ENCODE measurements at regions of chr4 and their contacts with region 1.

Region 1: GRCh38 chr4:37279894-37280592 is 35.5 kb downstream of the NWD2 start:
- DNase-seq: no peak
- H3K4me3 ChIP-seq: no peak overlapping the region
- H3K27ac ChIP-seq: no peak overlapping the region
- H3K4me1 ChIP-seq: no peaks in the 10 kb centered on the region
- H3K27me3 ChIP-seq: no peaks in the 10 kb centered on the region
- CTCF ChIP-seq: no peak
- EP300 ChIP-seq: no peak
- POLR2A ChIP-seq: no peak

Region 2: DNA sequence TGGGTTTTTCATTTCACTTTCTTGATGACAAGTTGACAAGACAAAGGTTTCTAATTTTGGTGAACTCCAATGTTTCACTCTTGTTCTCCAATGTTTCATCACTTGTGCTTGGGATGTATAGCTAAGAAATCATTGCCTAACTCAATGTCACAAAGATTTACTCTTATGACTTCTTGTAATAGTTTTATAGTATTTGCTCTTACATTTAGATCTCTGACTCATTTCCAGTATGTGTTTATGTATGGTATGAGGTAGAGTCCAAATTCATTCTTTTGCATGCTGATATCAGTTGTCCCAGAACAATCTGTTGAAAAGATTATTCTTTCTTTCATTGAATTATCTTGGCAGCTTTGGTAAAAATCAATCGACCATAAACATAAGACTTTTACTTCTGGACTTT is 47.7 kb before region 1 on chr4:
- intact Hi-C with region 1: no loop called
- DNase-seq: no peak
- H3K4me3 ChIP-seq: no peak overlapping the region
- H3K27ac ChIP-seq: no peak overlapping the region
- H3K4me1 ChIP-seq: no peaks in the 10 kb centered on the region
- H3K27me3 ChIP-seq: no peaks in the 10 kb centered on the region
- CTCF ChIP-seq: no peak
- EP300 ChIP-seq: no peak
- POLR2A ChIP-seq: no peak

Region 3: GRCh38 chr4:37244583-37245390 is 35.3 kb before region 1 on chr4 and contains the start of gene NWD2:
- intact Hi-C with region 1: loop called in 1 of 4 experiments (anchors 1 kb)
- DNase-seq: peak in 1 of 5 donors; percentile 4
- H3K4me3 ChIP-seq: no peak within 1 kb of the TSS
- H3K27ac ChIP-seq: no peak within 1 kb of the TSS
- H3K4me1 ChIP-seq: no peaks in the 10 kb centered on the region
- H3K27me3 ChIP-seq: no peaks in the 10 kb centered on the region
- CTCF ChIP-seq: no peak
- EP300 ChIP-seq: no peak
- POLR2A ChIP-seq: no peak
- total RNA-seq, gene NWD2: 0.11 TPM in 1 of 7 donors, not detected in the others

Measured in ovary (tissue), 10 donors.